ENCODE measurements at regions of chr13 and their contacts with region 1.

Region 1: GRCh38 chr13:28636674-28637317 is 22.1 kb upstream of the POMP start:
- DNase-seq: peak in 10 of 14 experiments; percentile 5 to 76 (median 30)
- ATAC-seq: peak; percentile 91
- H3K4me3 ChIP-seq: no peak overlapping the region
- H3K4me3 Mint-ChIP-seq: no peak overlapping the region
- H3K27ac ChIP-seq: no peak overlapping the region
- H3K27ac Mint-ChIP-seq: no peak overlapping the region
- H3K4me1 ChIP-seq: peaks cover 3% of the 10 kb centered on the region
- H3K4me1 Mint-ChIP-seq: peaks cover 8% of the 10 kb centered on the region
- H3K27me3 ChIP-seq: no peaks in the 10 kb centered on the region
- H3K27me3 Mint-ChIP-seq: peaks cover 11% of the 10 kb centered on the region
- CTCF ChIP-seq: peak; percentile 63

Region 2: DNA sequence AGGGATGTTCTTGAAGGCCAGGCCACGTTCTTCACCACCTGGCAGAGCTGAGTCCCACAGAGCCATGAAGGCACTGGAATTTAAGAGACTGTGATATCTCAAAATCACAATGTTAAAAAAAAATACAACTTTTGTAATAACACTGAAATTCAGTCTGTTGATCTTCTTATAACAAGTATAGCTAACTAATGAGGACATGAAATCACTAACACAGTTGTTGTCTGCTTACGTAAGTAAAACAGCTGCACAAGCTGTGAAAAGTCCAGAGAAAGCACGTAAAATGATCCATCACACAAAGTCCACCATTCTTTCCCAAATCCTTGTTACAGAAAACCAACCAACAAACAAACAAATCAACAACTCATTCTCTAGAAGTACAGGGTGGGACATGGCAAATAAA is 569.3 kb before region 1 on chr13:
- CTCF ChIA-PET with region 1: no interaction called
- POLR2A ChIA-PET with region 1: no interaction called
- intact Hi-C with region 1: loop called (anchors 10 kb)
- DNase-seq: no peak
- ATAC-seq: no peak
- H3K4me3 ChIP-seq: no peak overlapping the region
- H3K4me3 Mint-ChIP-seq: no peak overlapping the region
- H3K27ac ChIP-seq: no peak overlapping the region
- H3K27ac Mint-ChIP-seq: no peak overlapping the region
- H3K4me1 ChIP-seq: no peaks in the 10 kb centered on the region
- H3K4me1 Mint-ChIP-seq: peaks cover 10% of the 10 kb centered on the region
- H3K27me3 ChIP-seq: no peaks in the 10 kb centered on the region
- H3K27me3 Mint-ChIP-seq: no peaks in the 10 kb centered on the region
- CTCF ChIP-seq: no peak

Region 3: DNA sequence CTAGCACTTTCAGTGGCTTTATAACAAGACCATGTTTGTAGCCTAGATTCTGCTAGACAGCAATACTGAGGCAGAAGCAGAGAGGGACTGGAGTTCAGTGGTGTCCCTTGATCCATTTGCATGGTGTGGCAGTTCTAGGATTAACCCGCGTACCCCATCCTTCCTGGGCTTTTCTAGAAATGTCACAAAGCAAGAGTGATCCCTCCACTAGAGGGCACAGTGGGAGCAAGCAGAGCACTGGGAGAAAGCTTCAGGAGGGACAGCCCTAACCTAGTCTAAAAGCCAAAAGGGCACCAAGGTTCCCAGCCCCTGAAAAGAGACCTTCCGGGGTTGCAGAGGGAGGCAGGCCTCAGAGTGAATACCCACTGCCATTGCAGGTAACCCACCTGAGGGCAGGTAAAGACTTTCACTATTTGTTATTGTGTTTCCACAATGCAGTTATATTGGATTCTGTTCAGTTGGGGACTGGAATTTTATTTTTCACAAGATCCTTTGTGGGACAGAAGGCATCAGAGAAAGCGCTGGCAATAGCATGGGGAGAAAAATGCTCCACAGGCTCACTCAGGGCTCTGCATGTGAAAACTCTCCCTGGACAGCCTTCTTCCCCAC is 312.5 kb before region 1 on chr13:
- CTCF ChIA-PET with region 1: no interaction called
- POLR2A ChIA-PET with region 1: no interaction called
- intact Hi-C with region 1: loop called in 1 of 2 experiments (anchors 1 kb)
- DNase-seq: peak; percentile 14 to 71 (median 35)
- ATAC-seq: peak; percentile 61
- H3K4me3 ChIP-seq: no peak overlapping the region
- H3K4me3 Mint-ChIP-seq: no peak overlapping the region
- H3K27ac ChIP-seq: no peak overlapping the region
- H3K27ac Mint-ChIP-seq: no peak overlapping the region
- H3K4me1 ChIP-seq: no peaks in the 10 kb centered on the region
- H3K4me1 Mint-ChIP-seq: no peaks in the 10 kb centered on the region
- H3K27me3 ChIP-seq: no peaks in the 10 kb centered on the region
- H3K27me3 Mint-ChIP-seq: no peaks in the 10 kb centered on the region
- CTCF ChIP-seq: peak; percentile 64

Region 4: GRCh38 chr13:28679628-28680027 is 42.8 kb after region 1 on chr13:
- CTCF ChIA-PET with region 1: no interaction called
- POLR2A ChIA-PET with region 1: no interaction called
- intact Hi-C with region 1: no loop called
- DNase-seq: no peak
- ATAC-seq: no peak
- H3K4me3 ChIP-seq: no peak overlapping the region
- H3K4me3 Mint-ChIP-seq: no peak overlapping the region
- H3K27ac ChIP-seq: no peak overlapping the region
- H3K27ac Mint-ChIP-seq: no peak overlapping the region
- H3K4me1 ChIP-seq: no peaks in the 10 kb centered on the region
- H3K4me1 Mint-ChIP-seq: no peaks in the 10 kb centered on the region
- H3K27me3 ChIP-seq: no peaks in the 10 kb centered on the region
- H3K27me3 Mint-ChIP-seq: no peaks in the 10 kb centered on the region
- CTCF ChIP-seq: no peak